ENCODE measurements at regions of chr4 and their contacts with region 1.

Region 1: DNA sequence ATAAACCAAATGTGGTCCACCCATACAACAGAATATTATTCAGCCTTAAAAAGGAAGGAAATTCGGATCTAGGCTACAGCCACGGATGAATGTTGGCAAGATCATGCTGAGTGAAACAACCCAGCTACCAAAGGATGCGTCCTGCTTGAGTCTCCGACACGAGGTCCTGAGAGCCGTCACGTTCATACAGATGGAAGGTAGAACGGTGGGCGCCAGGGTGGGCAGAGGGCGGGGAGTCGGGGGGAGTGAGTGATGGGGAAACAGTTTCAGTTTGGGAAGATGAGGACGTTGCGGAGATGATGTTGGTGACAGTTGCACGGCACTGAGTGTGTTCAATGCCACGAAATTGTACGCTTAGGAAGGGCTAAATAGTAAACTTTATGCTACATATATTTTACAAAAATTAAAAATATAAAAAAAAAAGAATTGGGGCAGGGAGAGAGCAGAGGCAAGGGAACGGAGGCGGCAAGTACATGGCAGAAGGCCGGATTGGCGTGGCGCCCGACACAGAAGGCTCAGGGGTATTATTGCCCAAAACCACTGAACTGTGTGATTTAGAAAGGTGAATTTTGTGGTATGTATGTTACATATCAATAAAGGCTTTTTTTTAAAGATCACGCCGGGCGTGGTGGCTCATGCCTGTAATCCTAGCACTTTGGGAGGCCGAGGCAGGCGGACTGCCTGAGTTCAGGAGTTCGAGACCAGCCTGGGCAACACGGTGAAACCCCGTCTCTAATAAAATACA is 14.8 kb upstream of the MXD4 start:
- DNase-seq: no peak
- ATAC-seq: no peak
- H3K4me3 ChIP-seq: no peak overlapping the region
- H3K27ac ChIP-seq: no peak overlapping the region
- H3K4me1 ChIP-seq: no peaks in the 10 kb centered on the region
- H3K27me3 ChIP-seq: no peaks in the 10 kb centered on the region
- CTCF ChIP-seq: no peak

Region 2: DNA sequence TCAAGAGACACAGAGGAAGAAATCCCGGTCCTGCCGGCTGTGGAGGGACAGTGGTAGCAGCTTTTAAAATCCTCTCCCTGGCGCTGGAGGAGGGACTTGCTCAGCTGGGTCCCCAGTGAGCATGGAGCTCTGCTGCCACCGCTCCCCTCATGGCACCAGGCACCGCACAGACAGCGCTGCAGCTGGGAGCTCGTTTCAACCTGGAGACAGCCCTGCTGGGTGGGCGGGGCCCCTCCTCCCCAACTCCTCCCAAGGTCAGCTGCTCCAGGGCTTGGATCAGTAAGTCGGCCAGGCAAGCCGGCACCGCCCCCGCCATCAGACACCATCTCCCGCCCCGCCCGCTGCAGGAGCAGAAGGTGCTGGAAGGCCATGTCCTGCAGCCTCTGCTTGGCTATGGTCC is 125.3 kb after region 1 on chr4:
- intact Hi-C with region 1: loop called in 1 of 10 experiments (anchors 10 kb)
- DNase-seq: peak; percentile 57 to 65
- ATAC-seq: peak; percentile 70 to 90 (median 83)
- H3K4me3 ChIP-seq: peak overlapping the region in 9 of 10 donors; percentile 5 to 46 (median 30)
- H3K27ac ChIP-seq: peak overlapping the region in 1 of 10 donors; percentile 6
- H3K4me1 ChIP-seq: peaks cover 3 to 25% (median 17%) of the 10 kb centered on the region in 9 donors
- H3K27me3 ChIP-seq: peaks cover 0 to 24% (median 0%) of the 10 kb centered on the region in 7 donors
- CTCF ChIP-seq: no peak

Region 3: GRCh38 chr4:2948895-2949765 is 672.4 kb after region 1 on chr4:
- intact Hi-C with region 1: no loop called
- DNase-seq: no peak
- ATAC-seq: peak in 5 of 8 donors; percentile 31 to 52 (median 45)
- H3K4me3 ChIP-seq: no peak overlapping the region
- H3K27ac ChIP-seq: no peak overlapping the region
- H3K4me1 ChIP-seq: peaks cover 0 to 11% (median 0%) of the 10 kb centered on the region in 9 donors
- H3K27me3 ChIP-seq: no peaks in the 10 kb centered on the region
- CTCF ChIP-seq: peak in 7 of 9 donors; percentile 38 to 56 (median 52)

Measured in heart right ventricle (tissue), 16 donors.